ENCODE measurements at regions of chr21 and their contacts with region 1.

Region 1: GRCh38 chr21:46144464-46145070 is 10.8 kb downstream of the FTCD start:
- DNase-seq: no peak
- H3K4me3 ChIP-seq: no peak overlapping the region
- H3K27ac ChIP-seq: peak overlapping the region in 1 of 5 donors; percentile 83
- H3K4me1 ChIP-seq: peaks cover 0 to 13% (median 9%) of the 10 kb centered on the region in 4 donors
- H3K27me3 ChIP-seq: peaks cover 0 to 14% (median 6%) of the 10 kb centered on the region in 3 donors
- CTCF ChIP-seq: no peak
- EP300 ChIP-seq: no peak
- POLR2A ChIP-seq: no peak

Region 2: DNA sequence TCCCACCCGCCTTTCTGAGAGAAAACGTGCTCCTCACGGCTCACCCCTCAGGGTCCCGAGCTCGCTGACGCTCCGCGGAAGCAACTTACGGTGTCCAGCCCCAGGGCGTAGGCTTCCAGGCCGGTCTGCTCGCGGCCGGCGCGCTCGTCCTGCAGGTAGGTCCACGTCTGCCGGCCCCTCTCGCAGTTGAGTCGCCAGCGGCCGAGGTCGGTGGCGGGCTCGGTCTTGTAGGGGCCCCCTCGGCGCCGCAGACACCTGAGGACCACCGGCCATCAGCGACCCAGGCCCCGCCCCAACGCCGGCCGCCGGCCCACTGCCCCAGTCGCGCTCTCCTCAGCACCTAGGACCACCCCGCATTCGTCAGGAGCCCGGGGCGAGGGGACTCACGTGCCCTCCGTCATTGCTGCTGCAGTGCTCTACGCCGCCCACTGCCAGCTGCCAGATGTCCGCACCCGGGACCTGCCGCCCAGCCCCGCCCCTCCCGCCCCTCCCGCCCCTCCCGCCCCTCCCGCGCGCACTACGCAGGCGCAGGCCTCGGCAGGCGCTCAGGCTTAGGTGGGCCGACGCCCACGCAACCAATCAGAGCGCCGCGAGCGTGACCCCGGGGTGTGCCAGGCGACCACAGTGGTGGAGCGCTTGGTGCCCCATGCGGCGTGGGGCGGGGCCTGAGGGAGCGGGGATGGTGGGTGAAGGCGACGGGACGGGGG is 83.9 kb after region 1 on chr21 and contains the start of gene LSS:
- intact Hi-C with region 1: loop called (anchors 10 kb)
- DNase-seq: peak; percentile 98 to 99
- H3K4me3 ChIP-seq: peak within 1 kb of the TSS; percentile 70 to 97 (median 90)
- H3K27ac ChIP-seq: peak within 1 kb of the TSS; percentile 85 to 95 (median 93)
- H3K4me1 ChIP-seq: peaks cover 32 to 52% (median 46%) of the 10 kb centered on the region in 4 donors
- H3K27me3 ChIP-seq: no peaks in the 10 kb centered on the region
- CTCF ChIP-seq: no peak
- EP300 ChIP-seq: no peak
- POLR2A ChIP-seq: no peak
- total RNA-seq, gene LSS: 26.4 to 246 (median 46.7) TPM

Region 3: DNA sequence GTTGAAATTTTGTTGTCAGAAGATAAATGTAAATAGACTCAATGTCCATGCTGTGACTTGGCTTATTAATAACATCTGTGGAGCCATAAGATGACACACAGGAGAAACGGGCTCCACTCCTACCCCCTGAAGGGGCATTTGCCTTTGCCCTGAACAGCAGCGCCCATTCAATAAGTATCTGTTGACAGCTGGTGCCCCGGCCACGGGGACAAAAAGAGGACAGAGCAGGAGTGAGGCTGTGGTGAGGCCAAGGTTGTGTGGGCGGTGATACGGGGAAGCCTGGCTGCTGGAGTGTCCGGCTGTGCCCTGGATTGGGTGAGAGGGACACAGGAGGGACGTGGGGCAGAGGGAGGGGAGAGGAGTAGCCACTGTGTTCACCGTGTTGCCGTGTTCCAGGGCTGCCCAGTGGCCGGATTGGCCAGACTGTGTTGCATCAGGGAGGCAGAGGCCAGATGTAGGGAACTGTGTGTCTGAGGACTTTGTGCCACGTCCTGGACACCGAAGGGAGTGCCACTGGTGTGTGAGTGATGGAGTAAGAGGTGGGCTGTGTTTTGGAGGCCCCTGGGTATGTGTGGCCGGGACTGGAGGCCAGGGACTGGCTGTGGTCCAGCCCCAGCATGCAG is 506.0 kb after region 1 on chr21:
- intact Hi-C with region 1: no loop called
- DNase-seq: no peak
- H3K4me3 ChIP-seq: no peak overlapping the region
- H3K27ac ChIP-seq: no peak overlapping the region
- H3K4me1 ChIP-seq: no peaks in the 10 kb centered on the region
- H3K27me3 ChIP-seq: no peaks in the 10 kb centered on the region
- CTCF ChIP-seq: no peak
- EP300 ChIP-seq: no peak
- POLR2A ChIP-seq: no peak

Measured in stomach (tissue), 19 donors.